ENCODE measurements at regions of chr9 and their contacts with region 1.

Region 1: GRCh38 chr9:132768932-132769905 is 99.0 kb downstream of the GTF3C4 start:
- DNase-seq: peak; percentile 78
- H3K4me3 Mint-ChIP-seq: peak overlapping the region; percentile 97
- H3K27ac Mint-ChIP-seq: peak overlapping the region; percentile 99
- H3K4me1 Mint-ChIP-seq: peaks cover 31% of the 10 kb centered on the region
- H3K27me3 Mint-ChIP-seq: peaks cover 4% of the 10 kb centered on the region

Region 2: DNA sequence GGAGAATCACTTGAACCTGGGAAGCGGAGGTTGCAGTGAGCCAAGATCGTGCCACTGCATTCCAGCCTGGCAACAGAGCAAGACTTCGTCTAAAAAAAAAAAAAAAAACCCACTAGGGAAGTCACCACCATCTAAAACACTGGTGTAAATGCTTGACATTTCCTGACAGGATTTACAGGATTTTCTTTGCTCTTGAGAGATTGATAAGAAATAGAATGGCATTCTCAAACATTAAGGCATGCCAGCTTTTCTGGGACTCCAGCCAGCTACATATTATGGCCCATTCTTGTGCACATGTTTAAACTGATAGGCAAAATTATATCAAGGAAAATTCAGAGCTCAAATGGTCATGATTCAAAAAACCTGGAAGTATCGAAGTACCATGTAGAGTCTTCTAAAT is 70.2 kb before region 1 on chr9:
- CTCF ChIA-PET with region 1: no interaction called
- POLR2A ChIA-PET with region 1: no interaction called
- DNase-seq: no peak
- H3K4me3 Mint-ChIP-seq: no peak overlapping the region
- H3K27ac Mint-ChIP-seq: no peak overlapping the region
- H3K4me1 Mint-ChIP-seq: peaks cover 4% of the 10 kb centered on the region
- H3K27me3 Mint-ChIP-seq: peaks cover 12% of the 10 kb centered on the region

Region 3: DNA sequence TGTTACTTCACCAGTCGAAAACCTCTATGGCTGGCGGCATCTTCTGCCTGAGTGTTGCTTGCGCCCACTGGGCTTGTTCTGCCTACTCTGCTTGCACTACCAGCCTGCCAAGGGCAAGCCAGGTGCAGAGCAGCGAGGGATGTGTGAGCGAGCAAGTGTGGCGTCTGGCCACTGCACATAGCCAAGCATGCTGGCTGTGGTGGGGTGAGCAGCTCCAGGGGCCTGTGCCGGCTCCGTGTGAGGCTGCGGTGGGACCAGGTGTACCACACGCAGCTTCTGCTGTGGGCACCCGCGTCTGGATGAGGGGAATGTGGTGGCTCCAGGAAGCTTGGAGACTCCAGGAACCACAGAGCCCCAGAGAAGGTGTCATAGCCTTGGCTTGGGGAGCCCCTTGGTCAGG is 47.6 kb before region 1 on chr9:
- CTCF ChIA-PET with region 1: no interaction called
- POLR2A ChIA-PET with region 1: no interaction called
- DNase-seq: no peak
- H3K4me3 Mint-ChIP-seq: no peak overlapping the region
- H3K27ac Mint-ChIP-seq: no peak overlapping the region
- H3K4me1 Mint-ChIP-seq: no peaks in the 10 kb centered on the region
- H3K27me3 Mint-ChIP-seq: peaks cover 14% of the 10 kb centered on the region

Region 4: GRCh38 chr9:132752877-132753592 is 16.2 kb before region 1 on chr9:
- CTCF ChIA-PET with region 1: interaction called, 10 read pairs
- POLR2A ChIA-PET with region 1: no interaction called
- DNase-seq: no peak
- H3K4me3 Mint-ChIP-seq: no peak overlapping the region
- H3K27ac Mint-ChIP-seq: no peak overlapping the region
- H3K4me1 Mint-ChIP-seq: no peaks in the 10 kb centered on the region
- H3K27me3 Mint-ChIP-seq: peaks cover 2% of the 10 kb centered on the region